ENCODE measurements at regions of chr7 and their contacts with region 1.

Region 1: GRCh38 chr7:105156731-105157130 is 142.7 kb downstream of the KMT2E start:
- DNase-seq: no peak
- ATAC-seq: no peak
- H3K4me3 ChIP-seq: no peak overlapping the region
- H3K27ac ChIP-seq: no peak overlapping the region
- H3K4me1 ChIP-seq: peaks cover 0 to 19% (median 7%) of the 10 kb centered on the region in 12 donors
- H3K27me3 ChIP-seq: no peaks in the 10 kb centered on the region
- CTCF ChIP-seq: no peak
- POLR2A ChIP-seq: no peak

Region 2: GRCh38 chr7:105336009-105336408 is 179.3 kb after region 1 on chr7:
- intact Hi-C with region 1: loop called in 8 of 10 experiments (anchors 5 to 10 kb)
- DNase-seq: no peak
- ATAC-seq: no peak
- H3K4me3 ChIP-seq: no peak overlapping the region
- H3K27ac ChIP-seq: no peak overlapping the region
- H3K4me1 ChIP-seq: peaks cover 0 to 14% (median 5%) of the 10 kb centered on the region in 12 donors
- H3K27me3 ChIP-seq: no peaks in the 10 kb centered on the region
- CTCF ChIP-seq: peak; percentile 12 to 60 (median 47)
- POLR2A ChIP-seq: no peak

Region 3: DNA sequence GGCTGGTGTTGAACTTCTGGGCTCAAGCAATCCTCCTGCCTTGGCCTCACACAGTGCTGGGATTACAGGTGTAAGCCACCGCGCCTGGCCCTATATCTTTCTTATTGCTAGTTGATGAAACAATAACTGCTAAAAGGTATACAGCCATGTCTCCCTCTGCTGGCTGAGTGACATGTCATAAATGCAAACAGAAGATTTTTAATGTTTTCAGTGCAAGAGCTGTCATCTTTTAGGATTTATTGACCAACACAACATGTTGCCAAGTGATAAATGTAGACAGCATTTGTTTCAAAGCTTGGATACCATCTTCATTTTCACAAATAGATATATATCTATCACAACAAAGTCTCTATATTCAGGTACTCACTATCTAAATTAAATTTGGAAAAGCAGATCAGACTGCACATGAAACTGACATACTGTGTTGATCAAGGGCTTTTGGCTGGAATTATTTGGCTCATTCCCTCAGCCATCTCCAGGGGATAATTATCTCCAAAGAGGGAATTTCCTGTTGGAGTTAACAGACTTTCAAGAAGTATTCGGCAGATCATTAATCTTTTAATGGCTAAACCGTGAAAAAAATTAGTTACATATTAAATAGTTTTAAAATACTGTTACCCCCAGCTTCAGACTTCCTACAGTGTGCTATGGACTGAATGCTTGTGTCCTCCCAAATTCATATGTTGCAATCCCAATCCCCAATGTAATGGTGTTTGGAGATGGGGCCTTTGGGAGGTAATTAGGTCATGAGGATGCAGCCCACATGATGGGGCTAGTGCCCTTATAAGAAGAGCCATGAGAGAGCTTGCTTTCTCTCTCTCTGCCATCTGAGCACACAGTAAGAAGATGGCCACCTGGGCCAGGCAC is 273.2 kb after region 1 on chr7:
- intact Hi-C with region 1: loop called in 7 of 10 experiments (anchors 2 to 10 kb)
- DNase-seq: peak in 4 of 5 donors; percentile 9 to 39 (median 26)
- ATAC-seq: peak in 2 of 4 donors; percentile 36 to 50
- H3K4me3 ChIP-seq: no peak overlapping the region
- H3K27ac ChIP-seq: no peak overlapping the region
- H3K4me1 ChIP-seq: peaks cover 0 to 9% (median 0%) of the 10 kb centered on the region in 12 donors
- H3K27me3 ChIP-seq: no peaks in the 10 kb centered on the region
- CTCF ChIP-seq: peak; percentile 30 to 64 (median 46)
- POLR2A ChIP-seq: no peak

Region 4: GRCh38 chr7:105487579-105488571 is 331.1 kb after region 1 on chr7:
- intact Hi-C with region 1: loop called in 1 of 10 experiments (anchors 5 kb)
- DNase-seq: peak in 1 of 5 donors; percentile 11
- ATAC-seq: peak in 3 of 4 donors; percentile 71 to 87 (median 87)
- H3K4me3 ChIP-seq: no peak overlapping the region
- H3K27ac ChIP-seq: peak overlapping the region in 8 of 12 donors; percentile 2 to 29 (median 18)
- H3K4me1 ChIP-seq: peaks cover 0 to 12% (median 4%) of the 10 kb centered on the region in 12 donors
- H3K27me3 ChIP-seq: no peaks in the 10 kb centered on the region
- CTCF ChIP-seq: peak; percentile 12 to 58 (median 40)
- POLR2A ChIP-seq: peak in 1 of 2 donors; percentile 10

Measured in heart left ventricle (tissue), 16 donors.